MCF 10A (cell line): ENCODE measurements at regions of chr15 and their contacts with region 1.

Region 1: GRCh38 chr15:75903331-75904239 is at the start of gene FBXO22:
- DNase-seq: peak; percentile 92
- H3K4me3 Mint-ChIP-seq: peak within 1 kb of the TSS; percentile 93
- H3K27ac Mint-ChIP-seq: peak within 1 kb of the TSS; percentile 94
- H3K4me1 Mint-ChIP-seq: peaks cover 8% of the 10 kb centered on the region
- H3K27me3 Mint-ChIP-seq: no peaks in the 10 kb centered on the region
- CTCF ChIP-seq: no peak
- total RNA-seq, gene FBXO22: 49.2 and 70.7 TPM in 2 replicates

Region 2: GRCh38 chr15:75809986-75810750 is 93.4 kb before region 1 on chr15:
- CTCF ChIA-PET with region 1: interaction called, 4 read pairs
- POLR2A ChIA-PET with region 1: interaction called, 10 read pairs
- intact Hi-C with region 1: no loop called
- DNase-seq: peak; percentile 72
- H3K4me3 Mint-ChIP-seq: no peak overlapping the region
- H3K27ac Mint-ChIP-seq: no peak overlapping the region
- H3K4me1 Mint-ChIP-seq: no peaks in the 10 kb centered on the region
- H3K27me3 Mint-ChIP-seq: no peaks in the 10 kb centered on the region
- CTCF ChIP-seq: peak; percentile 73

Region 3: GRCh38 chr15:75823860-75824613 is 79.5 kb before region 1 on chr15:
- CTCF ChIA-PET with region 1: no interaction called
- POLR2A ChIA-PET with region 1: interaction called, 11 read pairs
- intact Hi-C with region 1: no loop called
- DNase-seq: peak; percentile 15
- H3K4me3 Mint-ChIP-seq: no peak overlapping the region
- H3K27ac Mint-ChIP-seq: no peak overlapping the region
- H3K4me1 Mint-ChIP-seq: peaks cover 14% of the 10 kb centered on the region
- H3K27me3 Mint-ChIP-seq: no peaks in the 10 kb centered on the region
- CTCF ChIP-seq: no peak

Region 4: DNA sequence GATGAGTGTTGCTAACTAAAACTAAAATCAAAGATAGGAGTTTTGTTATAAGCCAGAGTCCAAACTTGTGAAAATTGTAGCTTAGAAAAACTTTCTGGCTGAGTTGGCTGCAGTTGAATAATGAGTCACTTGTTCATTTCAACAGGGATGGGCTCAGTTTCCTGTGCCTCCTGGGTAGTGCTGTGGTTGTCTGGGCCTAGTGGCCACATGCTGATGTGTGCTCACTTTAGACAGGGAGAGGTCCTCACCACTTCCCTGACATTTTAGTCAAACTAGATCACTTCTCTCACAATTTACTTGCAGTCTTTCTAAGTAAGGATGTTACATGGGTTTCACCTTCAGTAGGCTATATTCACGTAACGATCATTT is 66.6 kb before region 1 on chr15:
- CTCF ChIA-PET with region 1: no interaction called
- POLR2A ChIA-PET with region 1: interaction called, 12 read pairs
- intact Hi-C with region 1: no loop called
- DNase-seq: peak; percentile 85
- H3K4me3 Mint-ChIP-seq: no peak overlapping the region
- H3K27ac Mint-ChIP-seq: no peak overlapping the region
- H3K4me1 Mint-ChIP-seq: peaks cover 7% of the 10 kb centered on the region
- H3K27me3 Mint-ChIP-seq: no peaks in the 10 kb centered on the region
- CTCF ChIP-seq: no peak

Region 5: GRCh38 chr15:75842722-75843551 is 60.6 kb before region 1 on chr15 and contains the start of gene UBE2Q2:
- CTCF ChIA-PET with region 1: no interaction called
- POLR2A ChIA-PET with region 1: interaction called, 23 read pairs
- intact Hi-C with region 1: no loop called
- DNase-seq: peak; percentile 62
- H3K4me3 Mint-ChIP-seq: peak within 1 kb of the TSS; percentile 86
- H3K27ac Mint-ChIP-seq: peak within 1 kb of the TSS; percentile 61
- H3K4me1 Mint-ChIP-seq: peaks cover 29% of the 10 kb centered on the region
- H3K27me3 Mint-ChIP-seq: no peaks in the 10 kb centered on the region
- CTCF ChIP-seq: no peak
- total RNA-seq, gene UBE2Q2: 28.3 and 36.4 TPM in 2 replicates

Region 6: DNA sequence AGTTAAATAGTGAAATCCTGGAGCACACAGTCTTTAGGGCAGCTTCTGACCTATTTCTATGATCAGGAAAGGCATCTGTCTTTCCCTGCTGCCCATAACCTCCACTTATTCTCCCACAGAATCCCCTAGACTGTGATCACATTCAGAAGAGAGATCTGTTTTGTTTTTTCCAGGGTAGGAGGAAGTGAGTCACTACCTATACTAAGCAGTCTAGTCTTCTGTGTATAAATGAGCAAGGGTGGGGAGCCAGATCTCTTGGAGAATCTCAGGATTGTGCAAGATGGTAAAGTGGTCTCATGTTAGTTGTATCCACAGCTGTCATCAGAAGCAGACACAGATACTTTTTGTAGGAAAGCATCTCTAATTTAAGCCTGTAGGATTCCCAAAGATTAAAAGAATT is 11.7 kb before region 1 on chr15:
- CTCF ChIA-PET with region 1: interaction called, 3 read pairs
- POLR2A ChIA-PET with region 1: interaction called, 12 read pairs
- intact Hi-C with region 1: no loop called
- DNase-seq: peak; percentile 62
- H3K4me3 Mint-ChIP-seq: no peak overlapping the region
- H3K27ac Mint-ChIP-seq: peak overlapping the region; percentile 42
- H3K4me1 Mint-ChIP-seq: peaks cover 7% of the 10 kb centered on the region
- H3K27me3 Mint-ChIP-seq: no peaks in the 10 kb centered on the region
- CTCF ChIP-seq: no peak

Region 7: DNA sequence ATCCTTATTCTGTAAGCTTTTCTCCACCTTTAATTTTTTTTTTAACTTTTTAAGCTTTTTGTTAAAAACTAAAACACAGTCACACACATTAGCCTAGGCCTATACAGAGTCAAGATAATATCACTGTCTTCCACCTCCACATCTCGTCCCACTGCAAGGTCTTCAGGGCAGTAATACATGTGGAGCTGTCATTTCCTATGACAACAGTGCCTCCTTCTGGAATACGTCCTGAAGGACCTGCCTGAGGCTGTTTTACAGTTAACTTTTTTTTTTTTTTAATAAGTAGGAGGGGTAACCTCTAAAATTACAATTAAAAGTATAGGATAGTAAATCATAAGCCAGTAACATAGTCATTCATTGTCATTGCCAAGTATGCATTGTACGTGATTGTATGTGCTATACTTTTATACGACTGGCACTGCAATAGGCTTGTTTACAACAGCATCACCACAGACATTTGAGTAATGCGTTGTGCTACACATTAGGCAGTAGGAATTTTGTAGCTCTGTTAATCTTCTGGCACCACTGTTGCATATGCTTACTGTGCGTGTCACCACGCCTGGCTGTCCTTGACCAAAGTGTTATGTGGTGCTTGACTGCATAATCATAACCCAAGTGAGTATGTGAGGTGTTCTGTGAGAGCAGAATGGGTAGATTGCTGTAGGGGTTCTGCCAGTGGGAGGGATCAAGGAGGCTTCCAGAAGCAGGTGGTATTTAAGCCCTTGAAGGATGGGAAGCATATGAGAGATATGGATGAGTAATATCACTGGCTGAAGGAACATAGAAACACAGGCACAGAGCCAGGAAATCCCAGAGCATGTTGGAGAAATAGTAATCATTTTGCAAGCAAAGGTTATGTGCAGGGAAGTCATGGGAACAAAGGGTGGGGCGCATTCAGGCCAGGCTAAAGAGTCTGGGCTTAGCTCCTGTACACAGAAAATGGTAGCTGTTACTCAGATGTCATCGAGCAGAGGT is 18.4 kb after region 1 on chr15:
- CTCF ChIA-PET with region 1: interaction called, 14 read pairs
- POLR2A ChIA-PET with region 1: interaction called, 96 read pairs
- intact Hi-C with region 1: loop called (anchors 2 kb)
- DNase-seq: peak; percentile 96
- H3K4me3 Mint-ChIP-seq: peak overlapping the region; percentile 59
- H3K27ac Mint-ChIP-seq: peak overlapping the region; percentile 95
- H3K4me1 Mint-ChIP-seq: peaks cover 30% of the 10 kb centered on the region
- H3K27me3 Mint-ChIP-seq: no peaks in the 10 kb centered on the region
- CTCF ChIP-seq: peak; percentile 34